ENCODE measurements at regions of chr19 and their contacts with region 1.

Region 1: GRCh38 chr19:44570984-44571684 is 41.7 kb upstream of the CEACAM20 start:
- DNase-seq: peak; percentile 76
- ATAC-seq: peak; percentile 96
- H3K4me3 ChIP-seq: no peak overlapping the region
- H3K27ac ChIP-seq: no peak overlapping the region
- H3K4me1 ChIP-seq: no peaks in the 10 kb centered on the region; a peak in 1 of 4 replicates
- H3K27me3 ChIP-seq: no peaks in the 10 kb centered on the region
- CTCF ChIP-seq: peak; percentile 77 to 82 (median 79)
- POLR2A ChIP-seq: no peak
- RAD21 ChIP-seq: peak; percentile 88

Region 2: GRCh38 chr19:44525721-44526430 is 45.3 kb before region 1 on chr19:
- CTCF ChIA-PET with region 1: no interaction called
- POLR2A ChIA-PET with region 1: no interaction called
- RAD21 ChIA-PET with region 1: no interaction called
- intact Hi-C with region 1: no loop called
- DNase-seq: no peak
- ATAC-seq: peak; percentile 61; the same call in 1 of the 2 replicates
- H3K4me3 ChIP-seq: no peak overlapping the region
- H3K27ac ChIP-seq: no peak overlapping the region
- H3K4me1 ChIP-seq: no peaks in the 10 kb centered on the region
- H3K27me3 ChIP-seq: no peaks in the 10 kb centered on the region
- CTCF ChIP-seq: peak in 1 of 3 experiments; percentile 14; a peak in 1 of 6 replicates
- POLR2A ChIP-seq: no peak
- RAD21 ChIP-seq: no peak

Region 3: GRCh38 chr19:44582581-44583265 is 11.6 kb after region 1 on chr19:
- CTCF ChIA-PET with region 1: interaction called, 20 read pairs
- POLR2A ChIA-PET with region 1: no interaction called
- RAD21 ChIA-PET with region 1: no interaction called
- intact Hi-C with region 1: no loop called
- DNase-seq: peak; percentile 36
- ATAC-seq: peak; percentile 88
- H3K4me3 ChIP-seq: no peak overlapping the region
- H3K27ac ChIP-seq: no peak overlapping the region
- H3K4me1 ChIP-seq: peaks cover 2 to 17% of the 10 kb centered on the region in 2 experiments
- H3K27me3 ChIP-seq: no peaks in the 10 kb centered on the region
- CTCF ChIP-seq: peak; percentile 40 to 98 (median 94); a peak in 5 of 6 replicates
- POLR2A ChIP-seq: no peak
- RAD21 ChIP-seq: peak; percentile 57

Region 4: DNA sequence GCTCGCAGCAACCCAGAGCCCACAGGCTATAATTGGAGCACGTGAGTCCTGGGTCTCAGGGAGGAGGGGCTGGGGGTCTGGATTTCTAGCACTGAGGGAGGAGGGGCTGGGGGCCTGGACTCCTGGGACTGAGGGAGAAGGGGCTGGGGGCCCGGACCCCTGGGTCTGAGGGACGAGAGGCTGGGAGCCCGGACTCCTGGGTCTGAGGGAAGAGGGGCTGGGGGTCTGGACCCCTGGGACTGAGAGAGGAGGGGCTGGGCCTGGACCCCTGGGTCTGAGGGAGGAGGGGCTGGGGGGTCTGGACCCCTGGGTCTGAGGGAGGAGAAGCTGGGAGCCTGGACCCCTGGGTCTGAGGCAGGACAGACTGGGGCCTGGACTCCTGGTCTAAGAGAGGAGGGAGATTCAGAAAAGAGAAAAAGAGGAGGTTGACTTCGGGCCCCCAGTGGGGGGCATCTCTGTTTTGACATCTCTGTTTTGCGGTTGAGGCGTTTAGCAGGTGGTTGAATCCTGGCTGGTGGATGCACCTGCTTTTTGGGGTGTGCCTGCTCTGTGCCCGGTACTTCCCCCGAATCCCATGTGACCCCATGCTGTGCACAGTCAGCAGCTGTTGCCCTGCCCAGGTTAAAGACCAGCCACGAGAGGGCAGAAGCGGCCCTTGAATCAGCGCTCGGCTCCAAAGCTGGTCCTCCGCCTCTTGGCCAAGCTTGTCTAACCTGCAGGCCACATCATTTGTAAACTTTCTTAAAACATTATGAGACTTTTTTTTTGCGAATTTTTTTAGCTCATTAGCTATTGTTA is 83.0 kb after region 1 on chr19:
- CTCF ChIA-PET with region 1: interaction called, 23 read pairs
- POLR2A ChIA-PET with region 1: no interaction called
- RAD21 ChIA-PET with region 1: interaction called, 6 to 9 read pairs
- intact Hi-C with region 1: no loop called
- DNase-seq: no peak
- ATAC-seq: peak; percentile 67
- H3K4me3 ChIP-seq: no peak overlapping the region
- H3K27ac ChIP-seq: no peak overlapping the region
- H3K4me1 ChIP-seq: no peaks in the 10 kb centered on the region
- H3K27me3 ChIP-seq: no peaks in the 10 kb centered on the region
- CTCF ChIP-seq: peak; percentile 22 to 59 (median 43); a peak in 5 of 6 replicates
- POLR2A ChIP-seq: no peak
- RAD21 ChIP-seq: peak; percentile 55

Region 5: DNA sequence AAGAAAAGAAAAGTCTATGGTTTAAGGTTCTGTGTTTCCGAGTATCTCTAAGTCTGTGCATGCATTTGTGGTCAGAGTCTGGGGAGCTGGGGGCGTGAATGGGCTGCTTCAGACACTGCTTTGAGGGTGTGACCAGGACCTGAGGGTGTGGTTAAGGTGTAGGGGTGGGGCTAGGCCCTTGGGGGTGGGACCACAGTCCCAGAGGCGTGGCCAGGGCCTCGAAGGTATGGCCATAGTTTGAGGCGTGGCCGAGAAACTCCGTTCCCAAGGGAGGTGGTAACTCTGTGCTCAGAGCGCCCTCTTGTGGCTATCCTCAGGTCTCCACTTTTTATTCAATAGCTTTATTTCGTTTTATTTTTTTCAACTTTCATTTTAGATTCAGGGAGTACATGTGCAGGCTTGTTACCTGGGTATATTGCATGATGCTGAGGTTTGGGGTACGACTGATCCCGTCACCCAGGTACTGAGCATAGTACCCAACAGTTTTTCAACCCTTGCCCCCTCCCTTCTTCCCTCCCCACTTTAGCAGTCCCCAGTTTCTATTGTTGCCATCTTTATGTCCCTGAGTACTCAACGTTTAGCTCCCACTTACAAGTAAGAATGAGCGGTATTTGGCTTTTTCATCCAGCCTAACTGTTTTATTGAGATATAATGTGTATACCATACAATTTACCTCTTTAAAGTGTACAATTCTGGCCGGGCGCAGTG is 199.6 kb after region 1 on chr19:
- CTCF ChIA-PET with region 1: interaction called, 19 read pairs
- POLR2A ChIA-PET with region 1: no interaction called
- RAD21 ChIA-PET with region 1: interaction called, 6 to 7 read pairs
- intact Hi-C with region 1: loop called (anchors 2 kb)
- DNase-seq: peak; percentile 96
- ATAC-seq: peak; percentile 95
- H3K4me3 ChIP-seq: peak overlapping the region in 1 of 2 experiments; percentile 9; a peak in 1 of 4 replicates
- H3K27ac ChIP-seq: peak overlapping the region; percentile 18; the same call in 1 of the 2 replicates
- H3K4me1 ChIP-seq: peaks cover 33 to 50% of the 10 kb centered on the region in 2 experiments
- H3K27me3 ChIP-seq: no peaks in the 10 kb centered on the region
- CTCF ChIP-seq: peak; percentile 62 to 93 (median 83); a peak in 5 of 6 replicates
- POLR2A ChIP-seq: no peak
- RAD21 ChIP-seq: peak; percentile 99

Measured in HCT116 (cell line).